ENCODE measurements at regions of chr5 and their contacts with region 1.

Region 1: GRCh38 chr5:68460147-68460798 is 244.7 kb downstream of the PIK3R1 start:
- DNase-seq: peak; percentile 39 to 86 (median 46)
- ATAC-seq: peak; percentile 85
- H3K4me3 ChIP-seq: no peak overlapping the region
- H3K27ac ChIP-seq: no peak overlapping the region
- H3K4me1 ChIP-seq: peaks cover 0 to 30% of the 10 kb centered on the region in 2 experiments; a peak in 3 of 5 replicates
- H3K27me3 ChIP-seq: no peaks in the 10 kb centered on the region
- CTCF ChIP-seq: peak; percentile 60 to 86 (median 60); a peak in 5 of 6 replicates
- EP300 ChIP-seq: no peak
- POLR2A ChIP-seq: no peak
- RAD21 ChIP-seq: peak; percentile 91 to 95

Region 2: GRCh38 chr5:68261569-68262065 is 198.7 kb before region 1 on chr5:
- CTCF ChIA-PET with region 1: no interaction called
- POLR2A ChIA-PET with region 1: no interaction called
- in situ Hi-C with region 1: no loop called
- intact Hi-C with region 1: no loop called
- DNase-seq: no peak
- ATAC-seq: no peak
- H3K4me3 ChIP-seq: no peak overlapping the region
- H3K27ac ChIP-seq: no peak overlapping the region
- H3K4me1 ChIP-seq: no peaks in the 10 kb centered on the region
- H3K27me3 ChIP-seq: no peaks in the 10 kb centered on the region
- CTCF ChIP-seq: peak in 1 of 3 experiments; percentile 34; a peak in 2 of 6 replicates
- EP300 ChIP-seq: no peak
- POLR2A ChIP-seq: no peak
- RAD21 ChIP-seq: no peak

Region 3: DNA sequence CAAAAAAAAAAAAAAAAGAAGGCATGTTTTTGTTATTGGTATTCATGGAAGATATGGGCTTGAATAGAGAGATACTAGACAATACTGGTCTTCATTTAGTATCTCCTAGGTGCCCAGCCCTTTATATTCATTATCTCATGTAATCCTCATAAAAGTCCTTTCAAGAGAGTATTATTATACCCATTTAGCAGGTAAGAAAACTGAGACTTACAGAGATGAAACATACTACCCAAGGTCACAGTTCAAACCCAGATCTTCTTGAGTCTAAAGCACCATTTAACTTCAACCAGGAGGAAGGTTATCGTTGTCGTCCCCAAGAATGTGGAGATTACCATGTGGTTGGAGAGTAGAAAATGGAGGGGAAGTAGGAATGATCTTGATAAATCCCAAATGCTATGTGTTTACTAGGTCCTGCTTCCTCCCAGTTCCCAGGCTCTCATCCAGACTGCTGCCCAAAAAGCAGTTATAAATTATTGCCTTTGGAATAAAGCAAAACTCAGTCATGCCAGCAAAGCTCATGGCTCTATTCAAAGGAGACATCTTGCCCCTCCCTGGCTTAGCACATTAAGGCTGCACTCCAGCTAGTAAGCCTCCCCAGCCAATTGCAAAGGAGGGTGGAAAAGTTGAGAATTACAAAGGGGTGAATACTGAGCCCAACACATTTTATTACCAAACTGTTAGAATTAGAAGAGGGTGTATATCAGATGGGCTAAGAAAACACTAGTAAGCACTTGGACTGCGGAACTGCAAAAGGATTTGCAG is 80.8 kb before region 1 on chr5:
- CTCF ChIA-PET with region 1: no interaction called
- POLR2A ChIA-PET with region 1: no interaction called
- in situ Hi-C with region 1: no loop called
- intact Hi-C with region 1: loop called (anchors 2 kb)
- DNase-seq: no peak
- ATAC-seq: peak; percentile 16; the same call in 1 of the 3 replicates
- H3K4me3 ChIP-seq: no peak overlapping the region
- H3K27ac ChIP-seq: no peak overlapping the region
- H3K4me1 ChIP-seq: peaks cover 0 to 29% of the 10 kb centered on the region in 2 experiments; a peak in 2 of 5 replicates
- H3K27me3 ChIP-seq: no peaks in the 10 kb centered on the region
- CTCF ChIP-seq: no peak
- EP300 ChIP-seq: no peak
- POLR2A ChIP-seq: no peak
- RAD21 ChIP-seq: no peak

Region 4: DNA sequence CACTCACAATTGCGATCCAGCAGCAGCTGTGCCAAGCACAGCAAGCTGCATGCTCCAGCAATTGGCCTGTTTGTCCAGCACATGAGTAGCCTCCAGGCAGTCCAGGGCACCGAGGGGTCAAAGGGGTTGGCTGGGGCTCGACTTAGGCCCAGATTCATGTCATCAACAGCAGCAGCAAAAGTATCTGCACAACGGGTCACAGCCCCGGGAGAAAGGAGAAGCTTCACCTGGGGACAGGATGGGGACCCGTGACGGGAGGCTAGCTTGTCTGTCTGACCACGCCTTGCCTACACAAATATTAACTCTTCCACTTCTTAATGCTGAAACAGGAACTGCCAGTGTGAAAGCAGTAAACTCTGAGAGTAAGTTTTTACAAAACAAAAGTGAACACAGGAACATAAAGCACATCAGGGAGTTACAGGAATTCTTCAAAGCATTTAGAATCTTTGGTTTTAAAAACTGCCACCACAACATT is 53.5 kb before region 1 on chr5:
- CTCF ChIA-PET with region 1: no interaction called
- POLR2A ChIA-PET with region 1: no interaction called
- in situ Hi-C with region 1: no loop called
- intact Hi-C with region 1: no loop called
- DNase-seq: peak; percentile 24 to 39 (median 29)
- ATAC-seq: peak; percentile 57
- H3K4me3 ChIP-seq: no peak overlapping the region
- H3K27ac ChIP-seq: peak overlapping the region; percentile 42; the same call in 2 of the 3 replicates
- H3K4me1 ChIP-seq: peaks cover 24 to 49% of the 10 kb centered on the region in 2 experiments
- H3K27me3 ChIP-seq: no peaks in the 10 kb centered on the region
- CTCF ChIP-seq: no peak
- EP300 ChIP-seq: no peak
- POLR2A ChIP-seq: no peak
- RAD21 ChIP-seq: no peak

Region 5: DNA sequence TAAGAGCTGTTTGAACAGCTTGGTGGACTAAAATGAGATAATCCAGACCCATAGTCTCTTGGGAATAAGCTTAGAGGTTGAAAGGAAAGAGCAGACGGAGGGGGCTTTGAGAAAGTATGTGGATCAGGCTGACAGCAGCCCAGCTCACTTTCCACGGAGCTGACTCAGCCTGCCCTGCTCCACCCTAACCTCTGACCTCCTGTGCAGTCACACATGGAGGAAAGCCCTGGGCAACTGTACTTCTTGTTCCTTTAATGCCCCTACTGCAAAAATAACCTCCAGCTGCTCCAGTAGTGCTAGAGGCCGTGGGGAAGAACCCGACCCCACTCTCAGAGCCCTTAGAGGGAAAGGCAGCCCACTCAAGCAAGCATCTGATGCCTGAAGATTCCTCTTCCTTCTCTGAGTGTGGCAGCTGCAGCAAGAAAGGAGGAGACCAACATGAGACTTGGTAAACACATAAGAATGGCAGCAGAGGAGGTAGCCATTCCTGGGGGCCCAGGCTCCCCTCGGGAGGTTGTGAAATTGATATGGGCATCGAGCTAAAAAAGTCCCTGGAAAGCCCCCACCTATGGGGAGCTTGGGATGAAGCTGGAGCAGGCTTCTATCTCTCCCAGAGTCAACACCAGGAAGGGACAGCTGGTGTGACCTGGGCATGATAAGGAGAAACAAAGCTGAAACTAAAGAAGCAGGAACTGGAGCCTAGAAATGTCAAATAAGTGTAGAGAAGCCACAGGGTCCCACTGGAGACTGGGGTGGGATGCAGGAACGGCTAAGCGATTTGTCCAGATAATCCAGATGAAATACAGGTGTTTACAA is 40.4 kb before region 1 on chr5:
- CTCF ChIA-PET with region 1: no interaction called
- POLR2A ChIA-PET with region 1: no interaction called
- in situ Hi-C with region 1: no loop called
- intact Hi-C with region 1: loop called (anchors 1 kb)
- DNase-seq: peak; percentile 73 to 88 (median 74)
- ATAC-seq: peak; percentile 72
- H3K4me3 ChIP-seq: no peak overlapping the region
- H3K27ac ChIP-seq: peak overlapping the region; percentile 90
- H3K4me1 ChIP-seq: peaks cover 41 to 82% of the 10 kb centered on the region in 2 experiments
- H3K27me3 ChIP-seq: no peaks in the 10 kb centered on the region
- CTCF ChIP-seq: no peak
- EP300 ChIP-seq: peak; percentile 69; the same call in 1 of the 2 replicates
- POLR2A ChIP-seq: no peak
- RAD21 ChIP-seq: no peak

Region 6: DNA sequence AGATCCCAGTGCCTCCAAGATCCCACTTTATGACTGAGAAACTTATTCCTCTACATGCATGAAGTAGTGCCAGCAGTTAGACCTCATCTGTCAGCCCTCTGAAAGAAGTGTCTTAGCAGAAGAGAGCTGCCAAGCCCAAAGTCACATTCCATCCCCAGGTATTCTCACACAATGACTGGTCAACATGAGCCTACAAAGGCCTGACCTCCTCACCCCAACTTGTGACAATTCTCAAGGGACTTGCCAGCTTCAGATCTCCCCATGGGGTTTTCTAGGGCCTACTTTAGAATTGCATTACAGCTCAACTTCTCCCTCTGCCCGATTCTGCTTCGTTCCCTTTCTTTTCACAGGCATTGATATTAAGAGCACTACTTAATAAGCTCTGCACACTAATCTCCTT is 239.7 kb after region 1 on chr5:
- CTCF ChIA-PET with region 1: no interaction called
- POLR2A ChIA-PET with region 1: no interaction called
- in situ Hi-C with region 1: no loop called
- intact Hi-C with region 1: no loop called
- DNase-seq: no peak
- ATAC-seq: no peak
- H3K4me3 ChIP-seq: no peak overlapping the region
- H3K27ac ChIP-seq: no peak overlapping the region
- H3K4me1 ChIP-seq: peaks cover 0 to 16% of the 10 kb centered on the region in 2 experiments; a peak in 3 of 5 replicates
- H3K27me3 ChIP-seq: no peaks in the 10 kb centered on the region
- CTCF ChIP-seq: no peak
- EP300 ChIP-seq: no peak
- POLR2A ChIP-seq: no peak
- RAD21 ChIP-seq: no peak

Region 7: DNA sequence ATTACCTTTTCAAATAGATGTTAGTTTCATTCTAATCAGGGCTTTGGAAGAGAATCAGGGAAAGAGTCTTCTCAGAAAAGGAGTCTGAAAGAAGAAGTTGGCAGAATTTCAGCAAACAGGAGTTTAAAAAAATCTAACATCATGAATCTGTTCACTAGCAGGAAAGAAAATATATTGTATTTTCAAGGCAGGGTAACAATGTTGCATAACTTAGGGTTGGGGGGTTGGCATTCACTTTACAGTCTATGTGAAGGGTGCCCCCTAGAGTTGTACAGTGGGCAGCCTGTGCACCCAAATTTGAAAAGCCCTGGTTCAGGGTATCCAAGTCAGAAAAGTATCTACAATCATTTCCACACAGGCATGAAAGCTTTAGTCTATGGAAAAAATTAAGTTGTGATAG is 285.2 kb after region 1 on chr5:
- CTCF ChIA-PET with region 1: no interaction called
- POLR2A ChIA-PET with region 1: no interaction called
- in situ Hi-C with region 1: no loop called
- intact Hi-C with region 1: loop called (anchors 10 kb)
- DNase-seq: peak in 2 of 4 experiments; percentile 13 to 19
- ATAC-seq: peak; percentile 68; the same call in 2 of the 3 replicates
- H3K4me3 ChIP-seq: no peak overlapping the region
- H3K27ac ChIP-seq: no peak overlapping the region
- H3K4me1 ChIP-seq: no peaks in the 10 kb centered on the region
- H3K27me3 ChIP-seq: peaks cover 2 to 10% of the 10 kb centered on the region in 2 experiments; a peak in 2 of 5 replicates
- CTCF ChIP-seq: peak; percentile 23 to 43 (median 41); a peak in 3 of 6 replicates
- EP300 ChIP-seq: no peak
- POLR2A ChIP-seq: no peak
- RAD21 ChIP-seq: peak in 1 of 2 experiments; percentile 57; a peak in 2 of 4 replicates